Ascending aorta (tissue), 2 donors: ENCODE measurements at regions of chr1 and their contacts with region 1.

Region 1: DNA sequence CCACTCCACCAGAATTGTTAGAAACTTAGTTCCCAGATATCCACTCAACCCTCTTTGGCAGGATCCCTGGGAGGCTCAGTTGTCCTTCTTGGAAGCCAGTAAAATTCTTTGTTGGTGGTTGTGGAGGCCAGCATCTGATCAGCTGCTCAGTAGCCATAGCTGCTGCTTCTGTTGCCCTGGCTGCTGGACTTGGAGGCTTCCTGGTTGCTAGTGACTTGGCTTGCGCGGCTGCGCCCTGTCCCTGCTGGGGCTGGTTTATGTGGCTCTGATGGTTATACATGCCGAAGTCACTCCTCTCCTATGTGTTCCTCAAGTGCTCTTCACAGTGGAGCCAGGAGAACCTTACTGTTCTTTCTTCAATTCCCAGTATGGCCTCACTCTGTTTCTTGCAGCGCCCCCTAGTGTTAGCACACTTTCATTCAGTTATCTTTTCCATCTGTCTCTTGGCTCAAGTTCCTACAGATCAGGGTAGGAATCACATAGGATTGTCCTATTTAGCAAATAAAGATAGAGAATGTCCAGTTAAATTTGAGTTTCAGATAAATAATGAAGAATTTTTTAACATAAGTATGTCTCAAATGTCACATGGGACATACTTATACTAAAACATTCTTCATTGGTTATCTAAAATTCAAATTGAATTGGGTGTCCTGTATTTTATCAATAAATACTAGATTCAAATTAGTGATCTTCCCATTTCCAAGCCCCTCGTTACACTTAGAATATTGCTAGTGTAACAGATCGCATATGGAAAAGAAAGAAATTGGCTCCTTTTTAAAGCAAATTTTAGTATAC is 176.4 kb downstream of the TGFB2 start:
- DNase-seq: peak in 1 of 2 donors; percentile 76
- H3K4me3 ChIP-seq: no peak overlapping the region
- H3K27ac ChIP-seq: no peak overlapping the region
- H3K4me1 ChIP-seq: no peaks in the 10 kb centered on the region
- H3K27me3 ChIP-seq: no peaks in the 10 kb centered on the region
- CTCF ChIP-seq: peak; percentile 48 to 77 (median 73)

Region 2: GRCh38 chr1:218339267-218339831 is 182.2 kb before region 1 on chr1:
- intact Hi-C with region 1: loop called (anchors 2 kb)
- DNase-seq: no peak
- H3K4me3 ChIP-seq: no peak overlapping the region
- H3K27ac ChIP-seq: no peak overlapping the region
- H3K4me1 ChIP-seq: no peaks in the 10 kb centered on the region
- H3K27me3 ChIP-seq: no peaks in the 10 kb centered on the region
- CTCF ChIP-seq: peak; percentile 50 to 76 (median 70)

Region 3: DNA sequence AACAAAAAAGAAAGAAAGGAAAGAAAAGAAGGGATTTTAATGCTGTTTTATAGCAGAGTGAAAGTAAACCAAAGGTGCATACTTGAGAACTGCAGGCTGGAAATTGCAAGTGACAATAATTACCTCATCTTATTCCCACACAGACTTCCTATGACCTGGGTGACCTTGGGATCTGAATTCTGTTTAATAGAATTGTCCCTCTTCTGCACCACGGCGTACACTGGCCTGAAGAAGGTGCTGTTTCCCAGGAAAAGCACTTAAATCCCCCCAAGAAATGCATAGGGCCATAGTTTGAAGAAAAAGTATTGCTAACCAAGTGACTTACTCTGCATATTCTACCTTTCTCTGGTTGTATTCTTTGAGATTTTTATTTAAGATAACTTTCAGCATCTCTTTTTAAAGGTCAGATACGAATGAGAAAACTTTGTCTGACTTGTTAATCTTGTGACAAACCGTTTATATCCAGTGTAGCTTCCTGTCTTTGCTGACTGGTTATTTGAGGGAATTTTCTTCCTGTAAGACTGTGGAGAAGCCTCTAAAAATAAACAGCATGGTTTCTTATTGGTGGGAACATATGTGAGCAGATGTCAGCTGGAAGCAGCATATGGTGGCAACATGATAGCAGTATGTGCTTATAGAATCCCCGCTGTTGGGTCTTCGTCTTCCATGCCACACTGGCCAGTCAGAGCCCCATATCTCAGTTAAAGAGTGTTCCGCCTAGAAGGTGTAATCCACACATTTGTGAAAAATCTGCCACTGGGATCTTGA is 160.1 kb before region 1 on chr1:
- intact Hi-C with region 1: loop called (anchors 1 kb)
- DNase-seq: no peak
- H3K4me3 ChIP-seq: no peak overlapping the region
- H3K27ac ChIP-seq: no peak overlapping the region
- H3K4me1 ChIP-seq: peaks cover 17 to 30% of the 10 kb centered on the region in 2 donors
- H3K27me3 ChIP-seq: no peaks in the 10 kb centered on the region
- CTCF ChIP-seq: peak in 2 of 3 experiments; percentile 32 to 61

Region 4: GRCh38 chr1:218397752-218398339 is 123.7 kb before region 1 on chr1:
- intact Hi-C with region 1: no loop called
- DNase-seq: no peak
- H3K4me3 ChIP-seq: no peak overlapping the region
- H3K27ac ChIP-seq: no peak overlapping the region
- H3K4me1 ChIP-seq: peaks cover 0 to 6% of the 10 kb centered on the region in 2 donors
- H3K27me3 ChIP-seq: no peaks in the 10 kb centered on the region
- CTCF ChIP-seq: no peak

Region 5: DNA sequence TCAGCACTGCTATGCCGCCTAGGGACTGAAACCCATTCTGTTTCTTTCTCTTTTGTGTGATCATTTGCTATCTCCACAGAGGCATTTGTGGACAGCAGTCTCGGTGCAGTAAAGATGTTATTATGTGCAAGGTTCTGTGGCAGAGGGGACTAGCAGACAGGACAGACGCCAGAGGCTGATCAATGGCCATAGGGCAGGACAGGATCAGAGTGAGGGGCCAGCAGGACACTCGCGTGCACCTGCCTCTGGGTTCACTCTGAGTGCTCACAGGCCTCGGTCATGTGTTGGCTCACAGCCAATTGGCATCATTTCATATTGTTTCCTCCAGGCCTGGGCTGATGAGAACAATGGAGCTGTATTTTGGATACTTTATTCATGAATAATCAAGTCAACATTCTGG is 36.2 kb after region 1 on chr1:
- intact Hi-C with region 1: no loop called
- DNase-seq: no peak
- H3K4me3 ChIP-seq: no peak overlapping the region
- H3K27ac ChIP-seq: no peak overlapping the region
- H3K4me1 ChIP-seq: no peaks in the 10 kb centered on the region
- H3K27me3 ChIP-seq: no peaks in the 10 kb centered on the region
- CTCF ChIP-seq: no peak